ENCODE measurements at regions of chr22 and their contacts with region 1.

Region 1: DNA sequence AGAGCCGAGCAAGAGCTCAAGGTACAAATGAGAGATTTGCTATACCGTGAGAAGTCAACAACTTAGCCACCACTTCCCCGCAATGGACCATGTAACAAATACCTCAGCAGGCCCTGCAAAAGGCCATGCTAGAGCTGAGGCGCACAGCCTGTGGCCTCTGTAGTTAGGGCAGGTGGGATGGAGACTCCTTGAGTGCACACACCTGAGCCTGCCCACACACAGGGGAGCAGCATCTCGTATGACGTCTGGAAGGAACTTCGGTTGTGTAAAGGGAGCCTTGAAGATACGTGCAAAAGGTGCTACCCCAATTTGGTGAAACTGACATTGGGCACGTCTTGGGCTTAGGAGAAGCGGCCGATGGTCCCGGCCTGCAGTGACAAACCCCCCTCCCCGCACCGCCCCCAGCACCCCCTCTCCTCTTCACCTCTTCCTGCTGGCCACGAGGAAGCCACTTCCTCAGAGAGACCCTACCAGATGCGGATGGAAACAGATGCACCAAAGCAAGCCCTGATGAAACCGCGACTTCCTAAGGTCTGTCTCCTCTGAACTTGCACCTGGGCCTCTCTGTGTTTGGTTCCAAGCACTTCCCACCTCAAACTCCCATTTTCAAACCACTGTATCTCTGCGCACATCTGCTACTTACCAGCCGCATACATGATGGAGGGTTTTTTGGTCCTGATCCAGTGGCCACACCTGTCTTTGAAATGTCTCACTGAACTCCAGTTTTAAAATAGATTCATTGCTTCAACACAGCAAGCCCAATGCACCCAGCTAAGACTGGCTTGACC is 10.6 kb downstream of the CDPF1 start:
- DNase-seq: no peak
- H3K4me3 ChIP-seq: no peak overlapping the region
- H3K27ac ChIP-seq: no peak overlapping the region
- H3K4me1 ChIP-seq: no peaks in the 10 kb centered on the region
- H3K27me3 ChIP-seq: no peaks in the 10 kb centered on the region
- CTCF ChIP-seq: no peak

Region 2: DNA sequence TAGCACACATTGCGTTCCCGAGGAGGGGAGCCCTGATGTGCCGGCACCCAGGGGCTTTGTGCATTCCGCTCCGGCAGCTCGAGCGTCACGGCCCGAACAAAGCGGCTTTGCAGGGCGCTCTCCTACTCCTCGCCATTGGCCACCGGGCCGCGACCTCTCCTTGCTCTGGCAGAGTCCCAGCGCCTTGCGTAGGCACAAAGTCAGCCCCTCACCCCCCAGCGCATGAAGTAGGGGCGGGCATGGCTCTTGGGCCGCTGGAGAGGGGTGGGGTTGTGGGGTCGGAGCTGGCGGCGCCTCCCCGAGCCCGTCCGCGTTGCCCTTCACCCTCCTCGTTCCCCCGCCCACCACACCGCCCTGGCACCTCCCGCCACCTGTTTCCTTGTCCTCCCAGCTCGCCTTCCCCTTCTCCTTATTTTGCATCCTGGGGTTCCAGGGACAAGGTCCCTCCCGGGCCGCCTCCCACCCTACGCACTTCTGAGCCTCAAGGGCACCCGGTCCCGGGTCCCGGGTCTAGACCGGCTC is 89.9 kb before region 1 on chr22:
- dilution Hi-C with region 1: loop called (anchors 5 kb)
- DNase-seq: no peak
- H3K4me3 ChIP-seq: peak overlapping the region; percentile 37 to 65 (median 59)
- H3K27ac ChIP-seq: no peak overlapping the region
- H3K4me1 ChIP-seq: peaks cover 31% of the 10 kb centered on the region
- H3K27me3 ChIP-seq: peaks cover 9% of the 10 kb centered on the region
- CTCF ChIP-seq: no peak